GM10248 (cell line): ENCODE measurements at regions of chr6 and their contacts with region 1.

Region 1: DNA sequence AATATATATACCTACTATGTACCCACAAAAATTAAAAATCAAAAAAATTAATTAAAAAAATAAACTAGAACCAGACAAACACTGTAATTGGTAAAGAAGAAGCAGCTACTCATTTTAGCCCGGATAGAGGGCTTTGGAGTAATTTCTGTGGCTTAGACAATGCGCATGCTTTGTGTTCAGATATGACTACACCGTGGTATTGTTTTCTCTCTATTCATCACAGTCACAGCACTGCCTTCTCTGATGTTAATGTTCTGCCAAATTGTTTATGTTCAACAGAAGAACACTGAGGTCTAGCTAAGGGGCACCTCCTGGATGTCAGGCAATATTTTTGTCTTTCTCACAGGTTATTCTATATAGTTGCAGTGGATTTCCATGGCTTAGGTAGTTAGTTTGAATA is 77.5 kb upstream of the GJE1 start:
- DNase-seq: no peak
- CTCF ChIP-seq: no peak

Region 2: DNA sequence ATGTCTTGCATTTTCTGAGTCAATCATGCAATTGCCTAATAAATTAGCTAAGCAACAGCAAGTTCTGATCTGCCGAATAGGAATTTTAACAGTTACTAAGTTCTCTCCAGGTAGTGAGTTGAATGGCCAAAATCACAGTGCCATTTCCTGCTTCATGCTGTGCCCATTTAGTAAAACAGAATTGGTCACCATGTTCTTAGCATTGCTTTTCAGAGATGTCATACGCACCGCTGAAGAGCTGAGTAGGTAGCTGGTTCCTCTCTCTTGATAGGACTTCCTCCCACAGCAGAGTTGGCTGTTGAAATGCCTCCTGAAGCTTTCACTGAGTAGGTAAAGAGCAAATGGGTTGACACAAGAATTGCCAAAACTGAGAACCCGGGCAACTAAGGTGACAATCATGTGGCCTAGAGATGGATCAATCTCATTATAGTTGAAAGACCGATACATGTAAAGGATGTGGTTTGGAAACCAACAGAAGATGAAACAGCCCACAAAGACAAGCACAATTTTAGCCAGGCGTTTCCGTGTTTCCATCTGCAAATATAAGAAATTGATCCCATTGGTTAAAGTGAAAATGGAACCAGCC is 20.4 kb after region 1 on chr6:
- CTCF ChIA-PET with region 1: interaction called, 10 read pairs
- POLR2A ChIA-PET with region 1: no interaction called
- DNase-seq: no peak
- CTCF ChIP-seq: no peak

Region 3: DNA sequence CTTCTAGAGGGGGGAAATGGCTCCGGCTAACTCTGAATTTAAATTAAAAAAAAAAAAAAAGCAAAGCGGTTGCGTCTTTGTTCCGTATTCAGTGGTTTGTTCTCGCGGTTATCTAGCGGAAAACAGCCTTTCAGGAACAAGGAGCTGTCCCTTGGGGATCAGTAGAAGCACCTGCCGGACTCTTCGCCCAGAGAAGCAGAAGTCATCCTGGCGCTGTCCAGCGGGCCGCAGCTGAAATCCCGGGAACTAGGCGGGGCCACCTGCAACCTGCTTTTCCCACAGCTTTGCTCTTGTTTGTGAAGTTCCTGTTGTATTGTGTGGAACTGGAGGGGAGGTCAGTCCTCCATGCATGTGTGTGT is 33.6 kb after region 1 on chr6:
- CTCF ChIA-PET with region 1: no interaction called
- POLR2A ChIA-PET with region 1: no interaction called
- DNase-seq: no peak
- CTCF ChIP-seq: no peak

Region 4: GRCh38 chr6:142195862-142196541 is 140.8 kb after region 1 on chr6:
- CTCF ChIA-PET with region 1: no interaction called
- POLR2A ChIA-PET with region 1: no interaction called
- DNase-seq: no peak
- CTCF ChIP-seq: no peak

Region 5: DNA sequence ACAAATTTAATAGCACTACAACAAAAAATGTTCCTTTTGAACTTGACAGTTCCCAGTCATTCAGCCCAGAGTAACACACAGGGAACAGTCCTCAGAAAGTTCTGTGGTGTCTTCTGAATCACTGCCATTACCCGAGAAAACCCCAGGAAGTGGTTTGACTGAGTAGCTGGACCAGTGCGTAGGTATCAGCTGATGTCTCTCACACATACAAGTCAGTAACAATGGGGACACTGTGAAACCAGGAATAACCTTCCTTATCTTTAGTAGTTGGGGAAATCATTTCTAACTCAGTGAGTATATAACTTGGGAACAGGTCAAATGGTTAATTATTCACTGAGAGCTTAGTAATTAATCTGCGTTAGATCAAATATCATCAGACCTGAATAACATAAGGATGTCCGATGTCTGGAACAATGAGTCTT is 816.7 kb after region 1 on chr6:
- CTCF ChIA-PET with region 1: no interaction called
- POLR2A ChIA-PET with region 1: no interaction called
- DNase-seq: peak; percentile 38
- CTCF ChIP-seq: no peak